Vagina (tissue), 2 donors: ENCODE measurements at regions of chr12 and their contacts with region 1.

Region 1: DNA sequence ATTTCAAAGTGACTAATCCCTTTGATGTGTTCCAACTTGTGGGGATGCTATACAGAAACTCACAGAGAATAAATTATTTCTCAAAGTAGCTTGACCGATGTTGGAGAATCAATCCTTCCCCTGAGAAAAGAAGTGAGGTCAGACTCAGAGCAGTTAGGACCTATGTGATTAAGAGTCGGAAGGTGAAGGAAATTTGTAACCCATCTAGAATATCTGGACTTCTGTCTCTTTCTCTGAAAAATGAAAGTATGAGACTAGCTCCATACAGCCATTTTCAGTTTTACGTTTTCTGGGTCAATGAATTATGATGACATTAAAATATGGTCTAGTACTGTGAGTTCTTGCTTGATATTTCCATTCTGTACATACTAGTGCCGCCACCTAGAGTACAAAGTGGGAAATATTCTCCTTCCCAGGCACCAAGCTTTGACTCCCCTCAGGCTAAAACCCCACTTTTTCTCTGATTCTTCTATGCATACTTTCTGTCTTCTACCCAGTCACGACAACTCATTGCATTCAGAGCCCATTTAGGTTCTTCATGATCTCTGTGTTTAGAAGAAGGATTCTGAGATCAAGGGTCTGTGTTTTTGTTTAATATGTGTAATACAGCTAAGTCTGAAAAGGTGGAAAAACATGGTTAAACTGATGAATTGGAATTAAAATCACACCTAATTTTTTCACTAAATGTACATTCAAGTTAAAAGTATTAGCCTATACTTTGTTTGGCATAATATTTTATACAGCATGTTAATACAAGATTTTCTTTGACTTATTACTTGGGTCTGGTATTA is 6.9 kb upstream of the NTS start:
- DNase-seq: no peak
- H3K4me3 ChIP-seq: no peak overlapping the region
- H3K27ac ChIP-seq: no peak overlapping the region
- H3K4me1 ChIP-seq: peaks cover 7% of the 10 kb centered on the region
- H3K27me3 ChIP-seq: no peaks in the 10 kb centered on the region
- CTCF ChIP-seq: peak; percentile 62 to 80 (median 79)
- POLR2A ChIP-seq: no peak

Region 2: DNA sequence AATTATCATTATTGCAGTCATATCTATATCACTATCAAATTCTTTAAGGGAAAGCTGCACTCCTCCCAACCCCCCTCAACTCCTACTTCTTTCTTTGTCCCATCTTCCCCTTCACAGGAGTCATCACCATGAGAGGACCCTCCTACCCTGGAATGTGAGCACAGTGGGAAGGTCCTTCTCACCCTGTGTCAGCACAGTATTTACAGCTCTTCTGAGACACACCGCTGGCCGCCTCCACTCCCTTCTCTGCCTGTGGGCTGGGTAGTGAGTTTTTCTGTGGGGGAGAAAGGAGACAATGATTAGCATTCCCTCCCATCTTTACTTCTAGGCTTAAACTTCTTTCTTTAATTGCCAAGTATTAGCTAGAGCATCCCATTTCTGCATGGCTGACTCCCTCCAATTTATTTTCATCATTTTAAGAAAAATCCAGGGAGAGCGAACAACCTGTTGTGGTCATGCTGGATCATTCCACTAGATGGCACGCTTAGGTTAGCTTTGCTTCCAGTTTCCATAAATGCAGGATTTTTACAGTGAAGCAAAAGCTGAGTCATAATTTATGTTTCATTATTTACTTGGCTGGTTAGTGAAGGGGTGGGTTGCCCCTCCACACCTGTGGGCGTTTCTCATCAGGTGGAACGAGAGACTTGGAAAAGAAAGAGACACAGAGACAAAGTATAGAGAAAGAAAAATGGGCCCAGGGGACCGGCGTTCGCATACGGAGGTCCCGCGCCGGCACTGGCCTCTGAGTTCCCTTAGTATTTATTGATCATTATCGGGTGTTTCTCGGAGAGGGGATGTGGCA is 398.6 kb before region 1 on chr12:
- intact Hi-C with region 1: loop called (anchors 5 kb)
- DNase-seq: no peak
- H3K4me3 ChIP-seq: peak overlapping the region; percentile 8 to 33
- H3K27ac ChIP-seq: no peak overlapping the region
- H3K4me1 ChIP-seq: peaks cover 22% of the 10 kb centered on the region
- H3K27me3 ChIP-seq: no peaks in the 10 kb centered on the region
- CTCF ChIP-seq: peak; percentile 14 to 68 (median 49)
- POLR2A ChIP-seq: no peak

Region 3: DNA sequence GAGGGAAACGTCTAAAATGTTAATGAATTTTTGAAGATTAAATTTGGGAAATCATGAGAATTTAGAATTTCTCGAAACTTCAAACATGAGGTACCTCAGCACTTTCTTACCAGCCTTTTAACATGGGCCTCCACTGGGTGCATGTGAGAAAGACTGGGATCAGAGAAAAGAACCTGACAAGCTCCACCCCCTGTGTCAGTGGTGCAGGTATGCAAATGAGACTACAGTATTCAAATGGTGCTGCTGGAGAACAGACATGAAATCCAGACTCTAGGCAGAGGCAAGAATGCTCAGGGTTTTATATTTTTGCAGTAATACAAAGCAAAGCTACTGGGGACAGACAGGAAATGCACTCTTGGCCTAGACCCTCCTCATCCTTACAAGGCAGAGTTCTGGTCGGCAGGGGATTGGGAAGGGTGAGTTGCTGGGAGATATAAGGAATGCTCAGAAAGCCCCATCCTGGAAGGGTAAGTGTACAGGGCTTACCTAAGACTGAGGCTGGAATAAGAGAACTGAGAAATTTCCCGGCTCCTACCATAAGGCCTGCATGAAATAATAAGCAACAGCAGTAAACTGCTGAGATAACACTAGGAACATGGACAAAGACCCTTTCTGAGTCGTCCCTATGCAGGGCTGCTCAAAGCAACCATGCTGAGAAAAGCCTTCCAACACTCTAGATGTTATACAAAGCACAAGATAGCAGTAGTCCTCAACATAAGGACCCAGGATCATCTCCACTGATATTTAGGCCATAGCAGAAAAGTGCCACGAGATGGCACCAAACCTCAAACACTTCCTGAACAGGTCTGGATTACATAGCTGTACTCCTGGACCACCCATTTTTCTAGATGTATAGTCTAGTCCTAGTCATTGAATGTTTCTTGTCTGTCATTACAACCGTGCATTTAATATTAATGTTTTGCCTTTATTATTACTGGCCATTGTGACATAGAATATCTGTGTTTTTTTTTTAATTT is 291.8 kb before region 1 on chr12:
- intact Hi-C with region 1: loop called (anchors 10 kb)
- DNase-seq: no peak
- H3K4me3 ChIP-seq: no peak overlapping the region
- H3K27ac ChIP-seq: no peak overlapping the region
- H3K4me1 ChIP-seq: peaks cover 4% of the 10 kb centered on the region
- H3K27me3 ChIP-seq: no peaks in the 10 kb centered on the region
- CTCF ChIP-seq: peak; percentile 13 to 53 (median 40)
- POLR2A ChIP-seq: no peak

Region 4: DNA sequence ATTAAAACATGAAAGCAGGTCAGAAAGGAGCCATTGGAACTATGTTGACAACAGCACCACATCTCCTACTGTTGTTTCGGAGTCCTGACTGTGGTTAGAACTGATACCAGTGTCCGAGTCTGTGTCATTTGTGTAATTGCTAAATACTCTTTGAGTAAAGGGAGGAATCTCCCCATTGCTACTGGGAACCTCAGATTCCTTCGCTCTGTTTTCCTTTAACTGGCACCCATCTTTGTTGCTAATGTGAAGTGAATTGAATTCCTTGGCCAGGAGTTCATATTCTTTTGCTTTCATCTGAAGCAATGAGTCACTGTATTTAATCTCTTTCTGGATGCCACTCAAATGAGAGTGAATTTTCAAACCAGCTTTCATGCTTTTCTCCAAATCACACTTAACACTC is 62.5 kb before region 1 on chr12:
- intact Hi-C with region 1: no loop called
- DNase-seq: no peak
- H3K4me3 ChIP-seq: no peak overlapping the region
- H3K27ac ChIP-seq: peak overlapping the region; percentile 13
- H3K4me1 ChIP-seq: no peaks in the 10 kb centered on the region
- H3K27me3 ChIP-seq: no peaks in the 10 kb centered on the region
- CTCF ChIP-seq: no peak
- POLR2A ChIP-seq: no peak

Region 5: DNA sequence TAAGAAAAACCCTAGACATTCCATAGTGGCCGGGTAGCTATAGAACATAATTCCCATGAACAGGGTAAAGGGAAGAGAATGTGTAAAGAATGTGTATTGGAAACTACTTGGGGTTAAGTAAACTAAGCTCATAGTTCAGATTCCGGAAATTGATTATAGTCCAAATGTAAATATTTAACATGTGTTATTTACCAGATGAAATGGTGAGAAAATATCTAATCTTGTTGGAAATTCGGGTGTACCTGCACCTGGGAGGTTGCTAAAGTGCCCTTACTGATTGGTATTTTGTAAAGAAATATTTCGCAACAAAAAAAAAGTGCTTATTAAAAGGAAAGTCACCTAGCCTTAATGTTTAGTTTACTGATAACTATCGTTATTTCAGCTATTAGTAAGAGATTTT is 45.4 kb before region 1 on chr12:
- intact Hi-C with region 1: no loop called
- DNase-seq: no peak
- H3K4me3 ChIP-seq: no peak overlapping the region
- H3K27ac ChIP-seq: no peak overlapping the region
- H3K4me1 ChIP-seq: no peaks in the 10 kb centered on the region
- H3K27me3 ChIP-seq: no peaks in the 10 kb centered on the region
- CTCF ChIP-seq: no peak
- POLR2A ChIP-seq: no peak